ENCODE measurements at regions of chr7 and their contacts with region 1.

Region 1: GRCh38 chr7:98902523-98902922 is 24.2 kb downstream of the TRRAP start:
- DNase-seq: no peak
- ATAC-seq: no peak
- H3K4me3 Mint-ChIP-seq: no peak overlapping the region
- H3K27ac Mint-ChIP-seq: no peak overlapping the region
- H3K4me1 Mint-ChIP-seq: no peaks in the 10 kb centered on the region
- H3K27me3 Mint-ChIP-seq: no peaks in the 10 kb centered on the region

Region 2: DNA sequence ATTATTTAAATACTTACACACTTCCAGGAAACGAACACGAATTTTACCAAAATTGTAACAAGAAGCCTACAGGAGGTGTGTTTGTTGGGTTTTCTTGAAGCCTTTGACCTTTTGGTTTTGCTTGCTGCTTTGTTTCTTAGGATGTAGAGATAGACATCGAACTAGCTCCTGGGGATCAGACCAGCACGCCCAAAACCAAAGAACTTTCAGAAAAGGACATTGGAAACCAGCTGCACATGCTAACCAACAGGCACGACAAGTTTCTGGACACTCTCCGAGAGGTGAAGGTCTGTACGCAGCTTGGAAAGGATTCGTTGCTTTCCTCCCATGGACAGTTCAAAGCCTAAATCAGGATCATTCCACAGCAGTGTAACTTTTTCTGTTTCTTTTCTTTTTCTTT is 69.1 kb after region 1 on chr7:
- CTCF ChIA-PET with region 1: no interaction called
- POLR2A ChIA-PET with region 1: no interaction called
- intact Hi-C with region 1: loop called in 1 of 2 experiments (anchors 2 kb)
- DNase-seq: no peak
- ATAC-seq: no peak
- H3K4me3 Mint-ChIP-seq: no peak overlapping the region
- H3K27ac Mint-ChIP-seq: no peak overlapping the region
- H3K4me1 Mint-ChIP-seq: no peaks in the 10 kb centered on the region
- H3K27me3 Mint-ChIP-seq: no peaks in the 10 kb centered on the region

Measured in activated CD4-positive, alpha-beta T cell treated with anti-CD3 and anti-CD28 coated beads for 36 hours (primary cell).